Activated T-helper 2 cell treated with anti-CD3 and anti-CD28 coated beads, Interferon-gamma antibody, Interleukin-2, Interleukin-4, amounts not matched to agents 10 μg/mL and 5 μg/mL and 100 μg/mL, durations not matched to agents 14 hours and 24 hours and 36 hours (primary cell): ENCODE measurements at regions of chr2 and their contacts with region 1.

Region 1: DNA sequence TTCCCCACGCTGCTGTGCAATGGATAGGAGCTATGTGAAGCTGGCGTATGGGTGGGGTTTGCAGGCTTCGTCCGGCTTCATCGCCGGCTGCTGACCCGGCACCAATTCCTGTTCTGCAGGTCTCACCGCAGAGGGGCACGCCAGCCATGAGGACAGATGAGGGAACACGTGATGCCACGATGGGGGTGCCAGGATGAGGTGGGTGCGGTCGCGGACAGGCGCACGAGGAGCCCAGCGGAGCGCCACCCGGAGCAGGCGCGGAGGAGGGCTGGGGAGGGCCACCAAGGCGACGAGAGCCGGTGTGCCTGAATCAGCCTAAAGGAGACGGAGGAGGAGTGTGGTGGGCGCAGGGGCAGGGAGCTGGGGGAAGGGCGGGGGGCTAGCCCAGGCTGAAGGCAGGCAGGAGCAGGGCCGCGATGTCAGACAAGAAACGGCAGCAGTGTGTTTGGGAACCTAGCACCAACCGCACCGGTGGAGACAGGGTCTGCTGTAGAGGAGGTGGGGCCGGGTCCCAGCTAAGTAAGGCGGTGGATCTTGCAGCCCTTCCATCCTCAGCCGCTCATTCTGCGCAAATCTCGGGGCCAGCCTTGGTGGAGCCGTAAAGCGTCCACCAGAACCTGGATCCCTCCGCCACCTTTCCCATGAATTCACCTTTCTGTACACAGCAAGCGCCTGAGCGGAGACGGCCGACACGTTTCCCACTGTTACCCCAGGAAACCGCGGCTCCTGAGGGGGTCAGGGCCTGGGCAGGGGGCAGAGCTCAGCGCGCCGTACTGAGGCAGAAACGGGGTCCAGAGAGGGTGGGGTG is 17.0 kb upstream of the CD8A start:
- DNase-seq: no peak
- H3K4me3 Mint-ChIP-seq: peak overlapping the region; percentile 92
- H3K27ac Mint-ChIP-seq: peak overlapping the region; percentile 74
- H3K4me1 Mint-ChIP-seq: peaks cover 23% of the 10 kb centered on the region
- H3K27me3 Mint-ChIP-seq: peaks cover 56% of the 10 kb centered on the region

Region 2: GRCh38 chr2:86661333-86661732 is 146.3 kb before region 1 on chr2:
- intact Hi-C with region 1: no loop called
- DNase-seq: no peak
- H3K4me3 Mint-ChIP-seq: no peak overlapping the region
- H3K27ac Mint-ChIP-seq: no peak overlapping the region
- H3K4me1 Mint-ChIP-seq: no peaks in the 10 kb centered on the region
- H3K27me3 Mint-ChIP-seq: peaks cover 1% of the 10 kb centered on the region

Region 3: DNA sequence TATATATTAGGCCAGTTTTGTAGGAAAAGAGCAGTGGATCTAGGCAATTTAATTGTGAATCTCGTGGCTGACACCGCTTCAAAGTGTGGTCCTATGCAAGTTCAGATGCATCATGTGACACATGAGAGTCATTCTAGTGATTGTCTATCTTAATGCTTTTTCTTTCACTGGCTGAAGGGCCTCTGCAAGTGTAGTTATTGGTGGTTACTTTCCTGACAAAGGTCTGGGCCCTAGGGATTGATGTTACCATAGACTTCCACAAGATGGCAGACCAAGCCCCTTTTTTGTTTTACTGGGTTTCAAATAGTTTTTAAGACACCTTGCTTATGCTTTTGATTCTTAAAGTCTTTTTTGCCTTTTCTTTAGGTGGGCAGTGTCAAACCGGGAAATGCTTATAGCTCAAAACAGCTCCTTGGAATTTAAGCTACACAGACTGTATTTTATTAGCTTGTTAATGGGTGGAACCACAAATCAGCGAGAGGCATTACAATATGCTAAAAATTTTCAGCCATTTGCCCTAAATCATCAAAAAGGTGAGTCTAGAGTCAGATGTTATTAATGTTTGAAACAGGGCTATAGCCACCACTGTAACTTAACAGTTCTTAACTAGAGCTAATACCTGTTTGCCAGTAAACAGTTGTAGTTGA is 42.9 kb before region 1 on chr2:
- intact Hi-C with region 1: loop called (anchors 1 kb)
- DNase-seq: no peak
- H3K4me3 Mint-ChIP-seq: no peak overlapping the region
- H3K27ac Mint-ChIP-seq: peak overlapping the region; percentile 9
- H3K4me1 Mint-ChIP-seq: peaks cover 12% of the 10 kb centered on the region
- H3K27me3 Mint-ChIP-seq: no peaks in the 10 kb centered on the region